HCT116 (cell line): ENCODE measurements at regions of chr16 and their contacts with region 1.

Region 1: DNA sequence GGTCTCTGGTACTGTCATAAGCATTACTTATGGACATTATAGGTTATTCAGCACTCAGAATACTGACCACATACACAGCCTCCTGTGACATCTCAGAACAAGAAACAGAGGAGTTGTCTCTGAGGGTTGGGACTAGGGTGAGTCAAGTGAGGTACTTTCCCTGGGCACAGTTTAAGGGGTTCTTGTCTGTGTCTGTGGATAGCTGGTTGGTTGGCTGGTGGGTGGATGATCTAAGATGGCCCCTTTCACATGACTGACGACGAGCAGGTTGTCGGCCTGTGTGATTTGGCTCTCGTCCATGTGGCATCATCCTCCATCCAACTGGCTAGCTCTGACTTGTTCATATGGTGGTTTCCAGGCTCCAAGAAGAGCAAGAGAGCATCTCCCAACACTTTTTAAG is 163.9 kb downstream of the PRKCB start:
- DNase-seq: no peak
- ATAC-seq: no peak
- H3K4me3 ChIP-seq: no peak overlapping the region
- H3K27ac ChIP-seq: no peak overlapping the region
- H3K4me1 ChIP-seq: no peaks in the 10 kb centered on the region
- H3K27me3 ChIP-seq: peaks cover 18% of the 10 kb centered on the region; the same call in 1 of the 2 replicates
- CTCF ChIP-seq: no peak
- POLR2A ChIP-seq: no peak
- RAD21 ChIP-seq: no peak

Region 2: DNA sequence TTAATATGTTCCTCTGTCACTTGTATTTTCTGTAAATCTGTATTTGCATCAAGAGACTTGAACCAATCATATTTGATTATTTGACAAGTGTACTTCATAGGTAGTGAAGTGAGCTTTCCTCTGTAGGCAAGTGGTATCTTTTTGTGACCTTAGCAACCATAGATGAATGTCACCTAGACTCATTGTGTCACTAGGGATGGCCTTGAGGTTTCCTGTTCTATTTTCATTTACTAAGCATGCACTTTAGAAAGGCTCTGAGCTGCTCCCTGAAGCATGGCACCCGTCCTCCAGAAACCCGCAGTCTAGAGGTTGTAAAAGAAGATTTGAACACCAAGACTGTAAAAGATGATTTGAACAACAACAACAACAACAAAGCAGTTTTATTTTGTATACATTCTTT is 12.2 kb before region 1 on chr16:
- CTCF ChIA-PET with region 1: no interaction called
- POLR2A ChIA-PET with region 1: no interaction called
- RAD21 ChIA-PET with region 1: no interaction called
- intact Hi-C with region 1: no loop called
- DNase-seq: no peak
- ATAC-seq: no peak
- H3K4me3 ChIP-seq: no peak overlapping the region
- H3K27ac ChIP-seq: no peak overlapping the region
- H3K4me1 ChIP-seq: no peaks in the 10 kb centered on the region
- H3K27me3 ChIP-seq: peaks cover 35% of the 10 kb centered on the region
- CTCF ChIP-seq: no peak
- POLR2A ChIP-seq: no peak
- RAD21 ChIP-seq: no peak

Region 3: GRCh38 chr16:24010440-24011089 is 10.9 kb after region 1 on chr16:
- CTCF ChIA-PET with region 1: interaction called, 12 read pairs
- POLR2A ChIA-PET with region 1: no interaction called
- RAD21 ChIA-PET with region 1: no interaction called
- intact Hi-C with region 1: no loop called
- DNase-seq: peak; percentile 55
- ATAC-seq: peak; percentile 89
- H3K4me3 ChIP-seq: no peak overlapping the region
- H3K27ac ChIP-seq: no peak overlapping the region
- H3K4me1 ChIP-seq: no peaks in the 10 kb centered on the region
- H3K27me3 ChIP-seq: peaks cover 31% of the 10 kb centered on the region
- CTCF ChIP-seq: peak; percentile 59 to 86 (median 80); a peak in 5 of 6 replicates
- POLR2A ChIP-seq: no peak
- RAD21 ChIP-seq: peak; percentile 69